Prostate gland (tissue), 2 donors: ENCODE measurements at regions of chr15 and their contacts with region 1.

Region 1: DNA sequence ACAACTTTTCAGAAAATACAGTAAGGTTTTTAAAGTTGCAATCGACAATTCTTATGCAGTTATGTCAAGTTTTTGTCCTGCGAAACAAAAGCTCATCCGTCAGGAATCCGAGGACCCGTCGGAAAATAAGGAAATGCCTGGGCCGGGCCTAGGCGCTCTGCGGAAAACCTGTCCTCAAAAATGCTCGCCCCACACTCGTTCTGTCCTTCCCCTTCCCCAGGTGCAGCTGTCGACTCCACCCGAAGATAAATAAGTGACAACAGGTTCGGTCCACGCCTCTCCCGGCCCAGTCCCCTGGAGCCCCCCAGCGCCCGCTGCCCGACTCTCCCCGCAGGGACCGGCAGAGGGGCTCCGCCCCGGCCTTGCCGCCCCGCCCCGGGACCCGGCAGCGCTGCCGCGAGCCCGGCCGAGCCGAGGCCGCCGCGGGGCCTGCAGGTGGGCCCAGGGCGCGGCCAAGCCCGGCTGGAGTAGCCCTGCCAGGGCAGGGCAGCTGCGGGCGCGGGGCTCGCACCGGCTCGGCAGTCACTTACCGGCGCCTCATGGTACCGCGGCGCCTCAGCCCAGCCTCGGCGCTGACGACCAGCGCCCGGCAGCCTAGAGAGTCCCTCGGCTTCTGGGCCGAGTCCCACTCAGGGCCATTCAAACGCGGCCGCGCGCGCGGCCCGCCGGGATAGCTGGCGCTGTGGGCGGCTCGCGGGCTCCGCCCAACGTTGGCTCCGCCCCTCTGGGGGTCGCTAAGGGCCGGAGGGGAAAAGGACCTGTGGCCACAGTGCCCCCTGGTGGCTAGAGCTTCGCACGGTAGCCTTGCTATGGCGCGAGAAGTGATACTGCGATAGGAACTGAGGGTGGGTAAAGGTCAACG is at the start of gene KATNBL1:
- DNase-seq: peak; percentile 94
- H3K4me3 ChIP-seq: peak within 1 kb of the TSS; percentile 60 to 63
- H3K27ac ChIP-seq: peak within 1 kb of the TSS; percentile 79 to 85
- H3K4me1 ChIP-seq: no peaks in the 10 kb centered on the region
- H3K27me3 ChIP-seq: no peaks in the 10 kb centered on the region
- CTCF ChIP-seq: peak; percentile 92 to 98 (median 97)
- POLR2A ChIP-seq: peak; percentile 96
- total RNA-seq, gene KATNBL1: 24.8 to 53.6 TPM

Region 2: GRCh38 chr15:34056936-34057335 is 152.7 kb before region 1 on chr15:
- intact Hi-C with region 1: loop called (anchors 2 kb)
- DNase-seq: no peak
- H3K4me3 ChIP-seq: no peak overlapping the region
- H3K27ac ChIP-seq: no peak overlapping the region
- H3K4me1 ChIP-seq: no peaks in the 10 kb centered on the region
- H3K27me3 ChIP-seq: no peaks in the 10 kb centered on the region
- CTCF ChIP-seq: no peak
- POLR2A ChIP-seq: no peak

Region 3: DNA sequence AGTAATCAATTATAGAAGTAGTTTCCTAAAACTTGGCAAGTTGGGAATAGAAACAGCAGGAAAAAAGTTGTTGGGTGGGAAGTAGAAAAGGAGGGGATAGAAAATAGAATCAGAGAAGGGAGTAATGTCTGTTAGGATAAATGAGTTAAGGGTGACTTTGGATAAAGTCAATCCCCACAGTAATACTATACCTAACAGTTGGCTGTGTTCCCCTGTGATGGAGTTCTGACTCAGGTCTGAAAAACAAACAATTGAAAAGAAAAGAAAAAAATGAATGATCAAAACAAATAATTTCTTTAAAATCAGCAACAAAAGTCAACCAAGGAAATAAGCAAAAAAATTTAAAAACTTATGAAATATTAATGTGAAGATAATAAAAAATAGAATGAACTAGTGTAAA is 65.5 kb after region 1 on chr15:
- intact Hi-C with region 1: no loop called
- DNase-seq: no peak
- H3K4me3 ChIP-seq: no peak overlapping the region
- H3K27ac ChIP-seq: no peak overlapping the region
- H3K4me1 ChIP-seq: no peaks in the 10 kb centered on the region
- H3K27me3 ChIP-seq: no peaks in the 10 kb centered on the region
- CTCF ChIP-seq: no peak
- POLR2A ChIP-seq: no peak